Transverse colon (tissue), 4 donors: ENCODE measurements at regions of chr2 and their contacts with region 1.

Region 1: DNA sequence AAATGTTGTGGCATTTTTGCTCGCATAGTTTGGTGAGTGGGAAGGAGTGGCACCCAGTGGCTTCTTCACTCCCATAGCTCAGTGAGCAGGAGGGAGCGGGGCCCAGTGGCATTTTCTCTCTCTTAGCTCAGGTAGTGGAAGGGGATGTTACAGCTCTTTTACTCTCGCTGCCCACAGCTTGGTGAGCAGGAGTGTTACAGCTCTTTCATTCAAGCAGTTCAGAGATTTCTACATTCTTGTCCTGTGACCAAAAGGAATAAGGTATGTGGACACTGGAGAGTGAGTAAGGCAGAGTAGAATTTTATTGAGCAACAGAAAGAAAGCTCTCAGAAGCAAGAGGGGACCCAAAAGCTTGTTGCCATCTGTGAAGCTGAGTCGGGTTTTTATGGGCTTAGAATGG is 192.4 kb downstream of the SPAG16 start:
- DNase-seq: no peak
- H3K4me3 ChIP-seq: no peak overlapping the region
- H3K27ac ChIP-seq: no peak overlapping the region
- H3K4me1 ChIP-seq: no peaks in the 10 kb centered on the region
- H3K27me3 ChIP-seq: no peaks in the 10 kb centered on the region
- CTCF ChIP-seq: no peak
- EP300 ChIP-seq: no peak
- POLR2A ChIP-seq: no peak

Region 2: DNA sequence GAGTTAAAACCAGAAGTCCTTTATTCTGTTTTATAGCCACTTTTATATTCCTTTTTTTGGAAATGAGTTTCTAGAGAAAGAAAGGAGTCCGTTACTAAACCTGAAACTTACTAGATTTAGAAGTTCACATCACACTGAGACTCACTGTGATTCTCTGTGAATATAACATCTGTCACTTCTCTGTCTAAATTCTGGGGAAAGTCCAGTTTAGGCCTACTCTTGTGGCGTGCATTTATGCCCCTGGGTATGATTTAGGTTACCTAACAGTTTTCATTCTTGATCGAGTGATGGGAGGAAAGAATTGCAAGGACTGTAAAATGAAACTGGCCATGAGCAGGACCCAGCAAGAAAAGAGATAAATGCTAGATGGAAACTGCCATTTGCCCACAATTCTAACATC is 257.3 kb after region 1 on chr2:
- in situ Hi-C with region 1: no loop called
- intact Hi-C with region 1: loop called (anchors 2 kb)
- DNase-seq: no peak
- H3K4me3 ChIP-seq: no peak overlapping the region
- H3K27ac ChIP-seq: no peak overlapping the region
- H3K4me1 ChIP-seq: no peaks in the 10 kb centered on the region
- H3K27me3 ChIP-seq: no peaks in the 10 kb centered on the region
- CTCF ChIP-seq: no peak
- EP300 ChIP-seq: no peak
- POLR2A ChIP-seq: no peak